Aorta (tissue), 5 donors: ENCODE measurements at regions of chr17 and their contacts with region 1.

Region 1: DNA sequence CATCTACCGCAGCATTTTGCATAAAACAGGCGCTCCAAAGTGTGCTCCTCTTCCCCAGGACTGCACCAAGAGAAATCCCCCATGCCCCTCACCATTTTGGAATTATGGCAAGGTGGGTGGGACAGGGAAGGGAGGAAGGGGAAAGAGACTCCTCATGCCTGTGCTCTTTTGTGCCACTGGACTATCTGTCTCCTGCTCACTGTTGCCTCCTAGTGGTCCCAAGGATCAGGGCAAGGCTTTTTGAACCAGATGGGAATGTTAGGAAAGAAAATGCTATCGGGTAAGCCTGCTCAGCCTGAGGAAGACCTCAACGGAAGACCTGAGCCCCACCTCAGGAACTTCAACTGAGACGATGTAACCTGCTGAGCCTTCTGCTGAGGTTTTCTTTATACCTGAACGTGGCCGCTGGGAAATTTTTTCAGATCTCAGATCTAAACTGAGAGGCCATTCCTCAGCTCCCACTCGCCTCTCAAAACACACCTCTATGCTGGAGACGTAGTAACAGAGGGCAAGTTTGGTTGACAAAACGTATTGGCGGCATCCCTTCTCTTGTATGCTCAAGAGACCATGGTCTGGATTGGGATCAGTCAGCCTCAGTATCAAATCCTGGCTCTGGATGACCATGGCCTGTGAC is 58.3 kb downstream of the SPACA3 start:
- DNase-seq: no peak
- ATAC-seq: no peak
- H3K4me3 ChIP-seq: no peak overlapping the region
- H3K27ac ChIP-seq: no peak overlapping the region
- H3K4me1 ChIP-seq: no peaks in the 10 kb centered on the region
- H3K27me3 ChIP-seq: peaks cover 0 to 4% of the 10 kb centered on the region in 2 donors

Region 2: GRCh38 chr17:33072421-33073196 is 22.7 kb after region 1 on chr17:
- intact Hi-C with region 1: loop called in 1 of 2 experiments (anchors 1 kb)
- DNase-seq: no peak
- ATAC-seq: no peak
- H3K4me3 ChIP-seq: no peak overlapping the region
- H3K27ac ChIP-seq: no peak overlapping the region
- H3K4me1 ChIP-seq: no peaks in the 10 kb centered on the region
- H3K27me3 ChIP-seq: no peaks in the 10 kb centered on the region

Region 3: GRCh38 chr17:33284022-33284421 is 234.1 kb after region 1 on chr17:
- intact Hi-C with region 1: loop called in 1 of 2 experiments (anchors 10 kb)
- DNase-seq: peak in 1 of 2 donors; percentile 62
- ATAC-seq: peak; percentile 68
- H3K4me3 ChIP-seq: no peak overlapping the region
- H3K27ac ChIP-seq: no peak overlapping the region
- H3K4me1 ChIP-seq: peaks cover 0 to 6% of the 10 kb centered on the region in 2 donors
- H3K27me3 ChIP-seq: no peaks in the 10 kb centered on the region